Stomach (tissue), 19 donors: ENCODE measurements at regions of chr17 and their contacts with region 1.

Region 1: GRCh38 chr17:12256380-12256995 is 235.8 kb downstream of the MAP2K4 start:
- DNase-seq: peak; percentile 53 to 86
- H3K4me3 ChIP-seq: no peak overlapping the region
- H3K27ac ChIP-seq: peak overlapping the region in 1 of 5 donors; percentile 50
- H3K4me1 ChIP-seq: peaks cover 0 to 28% (median 5%) of the 10 kb centered on the region in 4 donors
- H3K27me3 ChIP-seq: no peaks in the 10 kb centered on the region
- CTCF ChIP-seq: peak in 5 of 7 experiments; percentile 27 to 78 (median 72)
- EP300 ChIP-seq: no peak
- POLR2A ChIP-seq: no peak

Region 2: DNA sequence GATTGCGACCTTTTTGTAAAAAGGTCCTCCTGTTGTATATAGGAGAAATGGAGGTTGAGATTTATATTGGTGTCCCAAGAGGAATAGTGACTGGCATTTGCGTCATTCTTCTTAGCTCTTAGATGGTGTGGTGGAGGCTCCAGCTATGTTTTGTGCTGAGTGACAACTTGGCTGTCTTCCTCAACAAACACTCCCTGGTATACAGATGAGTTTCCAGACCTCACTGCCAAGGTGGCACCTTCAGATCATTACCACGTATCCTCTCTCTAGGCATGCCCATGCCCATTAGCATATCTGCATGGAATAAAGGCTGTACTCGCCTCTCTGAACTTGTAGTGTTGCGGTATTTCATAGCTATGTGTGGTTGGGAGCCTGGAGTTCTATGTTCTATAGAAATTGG is 115.8 kb before region 1 on chr17:
- intact Hi-C with region 1: no loop called
- DNase-seq: no peak
- H3K4me3 ChIP-seq: no peak overlapping the region
- H3K27ac ChIP-seq: no peak overlapping the region
- H3K4me1 ChIP-seq: no peaks in the 10 kb centered on the region
- H3K27me3 ChIP-seq: no peaks in the 10 kb centered on the region
- CTCF ChIP-seq: no peak
- EP300 ChIP-seq: no peak
- POLR2A ChIP-seq: no peak

Region 3: GRCh38 chr17:12180644-12181261 is 75.7 kb before region 1 on chr17:
- intact Hi-C with region 1: loop called (anchors 10 kb)
- DNase-seq: peak in 1 of 2 donors; percentile 86
- H3K4me3 ChIP-seq: no peak overlapping the region
- H3K27ac ChIP-seq: peak overlapping the region in 1 of 5 donors; percentile 16
- H3K4me1 ChIP-seq: peaks cover 0 to 13% (median 2%) of the 10 kb centered on the region in 4 donors
- H3K27me3 ChIP-seq: no peaks in the 10 kb centered on the region
- CTCF ChIP-seq: peak in 5 of 7 experiments; percentile 48 to 80 (median 58)
- EP300 ChIP-seq: no peak
- POLR2A ChIP-seq: no peak

Region 4: GRCh38 chr17:12545877-12546513 is 289.5 kb after region 1 on chr17:
- intact Hi-C with region 1: loop called (anchors 10 kb)
- DNase-seq: peak in 1 of 2 donors; percentile 76
- H3K4me3 ChIP-seq: no peak overlapping the region
- H3K27ac ChIP-seq: no peak overlapping the region
- H3K4me1 ChIP-seq: peaks cover 0 to 7% (median 3%) of the 10 kb centered on the region in 4 donors
- H3K27me3 ChIP-seq: no peaks in the 10 kb centered on the region
- CTCF ChIP-seq: peak in 5 of 7 experiments; percentile 51 to 60 (median 52)
- EP300 ChIP-seq: no peak
- POLR2A ChIP-seq: no peak

Region 5: GRCh38 chr17:12667299-12667958 is 410.9 kb after region 1 on chr17:
- intact Hi-C with region 1: loop called (anchors 5 kb)
- DNase-seq: peak in 1 of 2 donors; percentile 84
- H3K4me3 ChIP-seq: peak overlapping the region; percentile 16 to 60 (median 56)
- H3K27ac ChIP-seq: peak overlapping the region in 4 of 5 donors; percentile 80 to 87 (median 80)
- H3K4me1 ChIP-seq: peaks cover 0 to 23% (median 14%) of the 10 kb centered on the region in 4 donors
- H3K27me3 ChIP-seq: peaks cover 0 to 35% (median 22%) of the 10 kb centered on the region in 3 donors
- CTCF ChIP-seq: peak in 5 of 7 experiments; percentile 29 to 66 (median 43)
- EP300 ChIP-seq: no peak
- POLR2A ChIP-seq: no peak

Region 6: DNA sequence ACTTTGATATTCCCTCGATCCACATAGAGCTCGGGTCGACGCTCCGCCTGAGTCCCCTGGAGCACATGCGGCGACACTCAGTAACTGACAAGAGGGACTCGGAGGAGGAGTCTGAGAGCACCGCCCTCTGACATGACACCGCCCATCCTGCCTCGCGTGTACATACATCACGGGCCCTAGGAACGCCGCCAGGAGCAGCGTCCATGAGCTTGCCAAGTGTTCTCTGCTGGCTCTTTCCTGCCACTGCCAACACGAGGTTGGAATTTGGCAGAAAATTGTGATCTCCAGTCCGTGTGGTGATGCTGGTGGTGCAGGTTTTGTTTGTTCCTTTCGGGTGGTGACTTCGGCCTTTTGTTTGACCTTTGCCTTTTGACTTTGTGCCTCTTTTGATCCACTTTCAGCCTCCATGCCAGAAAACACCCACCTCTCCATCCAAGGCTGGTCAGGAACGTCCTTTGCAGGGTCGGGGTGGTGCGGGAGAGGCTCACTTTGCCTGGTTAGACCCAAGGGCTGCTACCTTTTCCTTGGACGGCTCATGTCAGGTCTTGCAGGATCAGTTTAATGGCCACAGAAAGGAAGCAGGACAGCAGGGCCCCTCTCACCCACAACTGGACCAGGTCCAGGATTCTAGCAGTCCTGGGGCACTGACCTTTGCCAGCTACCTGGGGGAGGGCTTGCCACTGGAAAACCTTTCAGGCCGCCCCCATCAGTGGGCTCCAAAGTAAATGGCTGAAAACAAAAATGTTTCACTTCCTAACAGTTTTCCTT is 733.7 kb after region 1 on chr17:
- intact Hi-C with region 1: loop called (anchors 10 kb)
- DNase-seq: peak in 1 of 2 donors; percentile 29
- H3K4me3 ChIP-seq: no peak overlapping the region
- H3K27ac ChIP-seq: no peak overlapping the region
- H3K4me1 ChIP-seq: peaks cover 0 to 10% (median 0%) of the 10 kb centered on the region in 4 donors
- H3K27me3 ChIP-seq: no peaks in the 10 kb centered on the region
- CTCF ChIP-seq: no peak
- EP300 ChIP-seq: no peak
- POLR2A ChIP-seq: no peak